KBM-7 (cell line): ENCODE measurements at regions of chr9 and their contacts with region 1.

Region 1: GRCh38 chr9:5186416-5187169 is 1.2 kb upstream of the INSL6 start:
- DNase-seq: peak; percentile 55

Region 2: GRCh38 chr9:5278486-5278885 is 91.9 kb after region 1 on chr9:
- in situ Hi-C with region 1: loop called (anchors 25 kb)
- DNase-seq: peak; percentile 12

Region 3: GRCh38 chr9:5582835-5583195 is 396.2 kb after region 1 on chr9:
- in situ Hi-C with region 1: loop called (anchors 25 kb)
- DNase-seq: no peak